ENCODE measurements at regions of chr11 and their contacts with region 1.

Region 1: DNA sequence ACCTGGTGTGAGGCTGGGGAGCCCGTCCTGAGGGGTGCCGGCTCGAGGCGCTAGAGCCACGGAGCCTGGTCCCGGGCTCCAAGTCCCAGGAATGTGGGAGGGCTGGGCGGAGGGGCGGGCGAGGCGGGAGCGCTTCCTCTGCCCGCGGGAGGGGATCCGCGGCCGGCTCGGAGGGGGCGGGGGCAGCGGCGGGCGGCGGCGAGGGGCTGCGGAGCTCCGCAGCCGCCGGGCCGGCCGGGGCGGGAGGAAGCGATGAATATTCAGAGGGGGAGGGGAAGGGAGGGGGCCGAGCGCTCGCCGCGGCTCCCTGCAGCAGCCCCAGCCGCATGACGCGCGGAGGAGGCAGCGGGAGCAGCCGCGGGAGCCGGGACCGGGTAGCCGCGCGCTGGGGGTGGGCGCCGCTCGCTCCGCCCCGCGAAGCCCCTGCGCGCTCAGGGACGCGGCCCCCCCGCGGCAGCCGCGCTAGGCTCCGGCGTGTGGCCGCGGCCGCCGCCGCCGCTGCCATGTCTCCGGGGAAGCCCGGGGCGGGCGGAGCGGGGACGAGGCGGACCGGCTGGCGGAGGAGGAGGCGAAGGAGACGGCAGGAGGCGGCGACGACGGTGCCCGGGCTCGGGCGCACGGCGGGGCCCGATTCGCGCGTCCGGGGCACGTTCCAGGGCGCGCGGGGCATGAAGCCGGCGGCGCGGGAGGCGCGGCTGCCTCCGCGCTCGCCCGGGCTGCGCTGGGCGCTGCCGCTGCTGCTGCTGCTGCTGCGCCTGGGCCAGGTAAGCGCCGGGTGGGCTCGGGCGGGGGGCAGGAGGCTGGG is at the start of gene PTPRJ:
- DNase-seq: peak; percentile 25 to 91 (median 76)

Region 2: DNA sequence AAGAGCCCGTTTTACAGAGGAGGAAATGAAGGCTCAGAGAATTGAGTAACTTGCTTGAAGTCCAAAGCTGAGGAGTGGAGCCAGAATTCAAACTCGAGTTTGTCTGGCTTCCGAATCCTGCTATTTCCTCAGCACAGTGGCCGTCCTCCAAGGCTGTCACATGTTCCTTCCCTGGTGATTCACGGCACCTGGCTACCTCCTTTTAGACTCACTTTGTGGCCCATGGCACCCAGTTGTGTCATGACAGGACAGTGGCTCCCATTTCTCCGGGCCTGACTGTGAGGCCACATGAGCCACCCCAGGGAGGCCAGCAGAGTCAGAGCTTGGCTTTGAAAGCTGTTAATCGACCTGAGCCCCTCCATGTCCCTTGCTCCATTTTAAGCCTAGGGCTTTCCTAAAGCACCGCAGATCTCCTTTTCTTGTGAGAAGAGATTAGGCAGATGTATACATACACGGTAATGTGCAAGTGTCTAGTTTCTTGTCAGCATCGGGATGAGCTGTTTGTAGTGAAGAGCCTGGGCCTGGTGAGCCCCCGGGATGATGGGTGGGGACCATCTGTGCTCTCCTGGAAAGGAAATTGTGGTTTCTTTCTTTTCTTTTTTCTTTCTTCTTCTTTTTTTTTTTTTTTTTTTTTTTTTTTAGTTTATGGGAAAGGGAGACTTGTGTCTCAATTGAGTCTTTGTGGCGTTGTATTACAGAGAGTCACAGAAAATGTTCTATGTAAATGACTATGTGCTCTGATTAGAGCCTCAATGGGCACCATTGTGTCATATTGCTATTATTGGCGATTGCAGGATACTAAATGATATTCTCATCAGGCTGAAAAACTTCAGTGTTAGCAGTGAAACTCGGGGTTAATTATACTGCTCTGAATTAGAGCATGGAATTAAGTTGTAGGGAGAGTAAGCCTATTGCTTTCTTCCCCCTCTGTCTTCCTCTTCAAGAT is 54.8 kb after region 1 on chr11:
- intact Hi-C with region 1: loop called (anchors 5 kb)
- DNase-seq: peak in 24 of 42 donors; percentile 22 to 79 (median 51)

Region 3: DNA sequence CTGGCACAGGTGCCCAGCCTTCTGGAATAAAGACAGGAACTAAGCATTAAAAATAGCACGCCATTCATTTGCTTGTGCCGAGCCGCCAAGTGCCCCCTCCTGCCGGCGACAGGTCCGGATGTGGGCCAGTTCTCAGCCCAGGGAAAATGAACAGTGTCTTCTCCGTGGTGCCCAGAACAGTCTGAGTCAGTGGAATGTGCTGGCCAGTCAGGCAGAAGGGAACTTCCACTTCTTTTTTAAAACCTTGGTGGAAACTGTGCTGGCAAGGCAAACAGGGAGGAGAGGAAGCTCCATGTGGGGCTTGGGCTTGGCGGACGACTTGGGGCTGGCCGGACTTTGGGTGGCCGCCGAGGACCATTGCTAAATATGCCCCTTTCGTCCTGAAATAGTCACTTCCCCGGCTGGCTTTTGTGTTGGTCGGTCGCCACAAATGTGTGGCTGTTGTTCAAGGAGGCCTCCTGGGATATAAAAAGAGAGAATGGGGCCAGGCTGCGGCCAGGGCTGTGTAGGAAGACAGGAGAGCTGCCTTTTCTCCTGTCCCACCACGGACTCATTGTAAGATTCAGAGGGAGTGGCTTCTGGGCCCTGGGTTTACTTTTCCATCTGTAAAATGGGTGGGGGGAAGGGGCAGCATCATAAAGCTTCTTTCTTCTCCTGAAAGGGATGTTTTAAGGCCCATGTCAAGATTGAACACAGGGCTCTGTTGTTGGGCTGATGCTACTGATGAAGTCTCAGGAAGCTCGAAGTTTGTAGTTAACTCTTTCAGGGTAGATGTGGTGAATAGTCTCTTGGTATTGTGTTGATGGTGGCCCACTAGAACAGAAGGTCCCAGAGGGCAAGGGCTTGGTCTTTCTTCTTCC is 100.9 kb after region 1 on chr11:
- intact Hi-C with region 1: no loop called
- DNase-seq: peak in 41 of 42 donors; percentile 37 to 88 (median 62)

Region 4: DNA sequence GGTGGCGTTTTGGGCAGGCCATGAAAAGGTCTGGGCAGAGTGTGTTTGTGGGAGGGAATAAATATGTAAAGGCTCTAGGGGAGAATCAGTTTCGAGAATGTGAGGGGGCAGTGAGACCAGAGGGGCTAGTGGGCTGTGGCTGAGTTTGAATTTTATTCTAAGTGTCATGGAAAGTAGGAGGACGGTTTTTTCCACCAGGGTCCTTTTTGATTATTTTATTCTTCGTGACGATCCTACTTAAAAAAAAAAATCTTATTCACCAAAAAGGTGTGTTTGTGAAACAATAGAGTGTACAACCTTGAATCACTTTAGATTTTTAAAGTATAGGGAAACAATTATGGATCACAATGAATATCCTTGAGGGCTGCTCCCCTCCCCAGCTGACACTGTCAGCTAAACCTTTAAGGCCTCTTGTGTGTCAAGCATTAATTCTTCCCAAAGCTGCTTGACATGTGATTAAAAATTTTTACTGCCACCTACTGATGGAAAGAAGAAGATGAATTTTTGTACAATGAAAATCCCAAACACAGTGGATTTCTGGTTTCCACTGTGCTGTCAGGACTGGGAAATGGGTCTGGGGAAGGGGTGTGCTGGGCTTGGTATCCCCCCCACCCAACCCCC is 128.7 kb after region 1 on chr11:
- intact Hi-C with region 1: loop called (anchors 2 kb)
- DNase-seq: peak in 2 of 42 donors; percentile 10 to 44

Region 5: DNA sequence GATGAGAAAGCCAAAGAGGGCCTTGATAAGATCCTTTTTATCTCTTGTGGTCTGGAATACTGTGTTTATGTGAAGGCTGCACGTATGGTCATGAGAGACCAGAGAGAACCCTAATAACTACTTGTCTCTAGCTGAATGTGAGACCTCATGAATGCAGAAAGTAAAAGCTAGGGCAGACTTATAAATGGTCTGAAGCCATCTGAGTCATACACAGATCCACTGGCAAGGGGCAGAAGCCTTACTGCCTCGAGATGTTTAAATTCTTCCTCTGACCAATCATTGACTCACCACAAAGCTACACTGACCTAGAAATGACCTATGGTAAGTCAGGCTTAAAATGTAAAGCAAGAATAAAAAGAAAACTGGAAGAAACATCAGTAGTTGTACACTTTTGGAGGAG is 213.4 kb after region 1 on chr11:
- intact Hi-C with region 1: no loop called
- DNase-seq: no peak

Measured in head of caudate nucleus (tissue), 42 donors.